Head of caudate nucleus (tissue), 42 donors: ENCODE measurements at regions of chr14 and their contacts with region 1.

Region 1: GRCh38 chr14:31084385-31084784 is 58.2 kb upstream of the STRN3 start:
- DNase-seq: no peak

Region 2: GRCh38 chr14:30456296-30456695 is 628.1 kb before region 1 on chr14:
- intact Hi-C with region 1: no loop called
- DNase-seq: no peak

Region 3: GRCh38 chr14:30756596-30756995 is 327.8 kb before region 1 on chr14:
- intact Hi-C with region 1: no loop called
- DNase-seq: no peak

Region 4: DNA sequence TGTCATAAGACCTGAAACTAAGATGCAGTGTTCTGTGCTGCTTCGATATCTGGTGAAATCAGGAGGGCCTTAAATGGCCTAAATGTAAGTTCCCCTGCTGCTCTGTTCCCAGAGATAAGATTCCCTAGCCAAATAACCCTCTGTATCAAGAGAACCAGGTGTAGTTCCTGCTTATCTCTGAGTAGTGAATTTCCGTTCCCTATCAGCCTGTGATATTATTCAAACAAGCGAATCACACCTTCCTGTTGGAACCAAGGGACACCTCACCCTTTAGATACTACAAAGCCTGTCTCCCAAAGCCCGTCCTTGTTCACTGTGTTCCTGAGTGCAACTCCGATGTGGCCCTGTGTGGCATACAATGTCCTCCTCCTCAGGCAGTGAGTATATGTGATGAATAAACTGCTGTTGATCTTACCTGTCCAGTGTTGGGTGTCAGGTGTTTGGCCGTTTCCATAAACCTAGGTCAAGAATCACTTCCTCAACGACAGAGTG is 262.3 kb before region 1 on chr14:
- intact Hi-C with region 1: no loop called
- DNase-seq: no peak

Region 5: DNA sequence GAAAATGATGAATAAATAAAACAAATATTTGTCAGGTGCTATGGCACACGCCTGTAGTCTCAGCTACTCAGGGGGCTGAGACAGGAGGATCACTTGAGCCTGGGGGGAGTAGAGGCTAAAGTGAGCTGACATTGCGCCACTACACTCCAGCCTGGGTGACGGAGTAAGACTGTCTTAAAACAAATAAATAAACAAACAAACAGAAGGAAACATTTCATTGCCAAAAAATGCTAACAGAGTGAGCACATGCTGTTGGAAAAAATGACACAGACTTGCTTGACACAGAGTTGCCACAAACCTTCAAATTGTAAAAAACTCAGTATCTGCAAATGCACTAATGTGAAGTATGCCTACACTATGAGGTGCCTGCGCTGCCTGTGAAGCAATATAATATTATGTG is 109.8 kb before region 1 on chr14:
- intact Hi-C with region 1: loop called (anchors 10 kb)
- DNase-seq: no peak